Naive thymus-derived CD4-positive, alpha-beta T cell (primary cell): ENCODE measurements at regions of chr9 and their contacts with region 1.

Region 1: DNA sequence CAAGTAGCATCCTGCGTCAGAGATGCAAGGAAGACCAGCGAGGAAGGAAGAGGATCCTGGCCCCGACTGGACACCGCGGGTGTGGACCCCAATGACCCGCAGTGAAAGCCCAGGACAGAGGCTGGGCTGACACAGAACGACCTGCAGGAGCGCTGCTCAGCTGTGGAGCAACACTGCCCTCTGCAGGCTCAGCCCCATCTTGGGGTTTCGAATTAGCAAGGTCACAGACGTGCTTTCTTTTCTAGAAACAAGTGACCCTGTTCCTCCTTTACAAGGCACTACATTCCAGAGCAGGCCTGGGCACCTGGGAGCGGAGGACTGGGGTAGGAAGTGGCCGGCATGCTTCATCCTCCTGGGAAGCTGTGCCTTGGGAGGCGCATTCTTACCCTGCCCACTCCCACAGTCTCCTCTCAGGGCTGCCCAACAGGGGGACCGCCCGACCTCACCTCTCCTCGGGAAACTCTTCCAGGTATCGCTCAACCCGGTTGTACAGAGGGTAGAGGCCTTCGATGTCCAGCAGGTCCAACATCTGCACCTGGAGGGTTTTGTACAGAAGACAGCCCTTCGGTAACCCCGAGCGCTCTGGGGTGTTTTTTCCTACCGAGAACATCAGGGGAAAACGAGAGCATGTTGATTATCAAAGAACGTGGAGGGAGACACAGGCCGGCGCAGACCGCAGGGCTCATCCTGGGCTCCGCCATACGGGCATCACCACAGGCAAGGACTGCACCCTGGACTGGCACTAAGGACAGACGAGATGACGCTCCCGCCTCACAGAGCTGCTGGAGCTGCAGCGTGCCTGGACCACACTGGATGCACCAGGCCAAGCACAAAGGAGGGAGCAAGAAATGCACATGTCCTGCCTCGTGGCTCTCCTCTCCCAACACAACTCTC is 35.0 kb downstream of the IPPK start:
- DNase-seq: peak; percentile 17 to 67 (median 46)
- ATAC-seq: peak; percentile 86
- H3K4me3 ChIP-seq: no peak overlapping the region
- H3K4me3 Mint-ChIP-seq: no peak overlapping the region
- H3K27ac ChIP-seq: no peak overlapping the region
- H3K27ac Mint-ChIP-seq: no peak overlapping the region
- H3K4me1 ChIP-seq: no peaks in the 10 kb centered on the region
- H3K4me1 Mint-ChIP-seq: peaks cover 0 to 12% (median 0%) of the 10 kb centered on the region in 7 donors
- H3K27me3 ChIP-seq: no peaks in the 10 kb centered on the region
- H3K27me3 Mint-ChIP-seq: no peaks in the 10 kb centered on the region

Region 2: DNA sequence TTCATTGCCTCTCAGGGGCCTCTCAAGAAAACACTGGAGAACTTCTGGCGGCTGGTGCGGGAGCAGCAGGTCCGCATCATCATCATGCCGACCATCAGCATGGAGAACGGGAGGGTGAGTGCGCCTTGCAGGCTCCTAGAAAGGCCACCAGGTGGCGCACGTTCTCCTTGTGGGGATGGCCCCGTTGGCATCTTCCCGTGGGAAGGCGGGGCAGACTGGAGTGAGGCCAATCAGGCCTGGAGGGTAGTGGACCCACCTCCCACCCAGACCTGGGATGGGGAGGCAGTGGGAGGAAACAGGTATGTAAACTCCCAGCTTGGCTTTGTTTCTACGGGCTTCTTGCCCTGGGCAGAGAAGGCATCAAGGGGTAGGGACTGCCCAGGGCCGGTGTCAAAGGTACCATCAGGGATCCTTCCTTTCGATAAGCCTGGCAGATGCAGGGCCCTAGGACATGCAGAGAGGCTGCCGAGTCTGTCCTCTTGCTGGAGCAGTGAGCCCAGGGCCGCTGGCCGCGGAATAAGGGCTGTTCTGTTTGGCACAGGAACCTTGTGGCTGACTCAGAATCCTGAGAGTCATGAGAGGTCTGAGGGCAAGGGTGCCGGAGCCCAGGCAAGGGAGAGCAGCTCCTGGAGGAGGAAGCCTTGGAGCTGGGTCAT is 500.9 kb before region 1 on chr9:
- CTCF ChIA-PET with region 1: no interaction called
- POLR2A ChIA-PET with region 1: no interaction called
- intact Hi-C with region 1: loop called in 1 of 2 experiments (anchors 1 kb)
- DNase-seq: peak; percentile 42 to 79 (median 57)
- ATAC-seq: peak; percentile 85
- H3K4me3 ChIP-seq: no peak overlapping the region
- H3K4me3 Mint-ChIP-seq: peak overlapping the region in 8 of 10 donors; percentile 2 to 66 (median 45)
- H3K27ac ChIP-seq: no peak overlapping the region
- H3K27ac Mint-ChIP-seq: no peak overlapping the region
- H3K4me1 ChIP-seq: peaks cover 4 to 6% of the 10 kb centered on the region in 2 donors
- H3K4me1 Mint-ChIP-seq: peaks cover 0 to 15% (median 7%) of the 10 kb centered on the region in 7 donors
- H3K27me3 ChIP-seq: no peaks in the 10 kb centered on the region
- H3K27me3 Mint-ChIP-seq: peaks cover 23 to 36% (median 27%) of the 10 kb centered on the region in 5 donors